ENCODE measurements at regions of chr22 and their contacts with region 1.

Region 1: GRCh38 chr22:29154364-29155048 is 51.2 kb upstream of the EMID1 start:
- DNase-seq: peak; percentile 75
- ATAC-seq: peak; percentile 95
- H3K4me3 Mint-ChIP-seq: no peak overlapping the region
- H3K27ac Mint-ChIP-seq: no peak overlapping the region
- H3K4me1 Mint-ChIP-seq: peaks cover 5% of the 10 kb centered on the region
- H3K27me3 Mint-ChIP-seq: peaks cover 25% of the 10 kb centered on the region
- CTCF ChIP-seq: peak; percentile 94

Region 2: GRCh38 chr22:28841111-28841510 is 313.4 kb before region 1 on chr22:
- CTCF ChIA-PET with region 1: no interaction called
- POLR2A ChIA-PET with region 1: no interaction called
- intact Hi-C with region 1: no loop called
- DNase-seq: no peak
- ATAC-seq: no peak
- H3K4me3 Mint-ChIP-seq: no peak overlapping the region
- H3K27ac Mint-ChIP-seq: no peak overlapping the region
- H3K4me1 Mint-ChIP-seq: no peaks in the 10 kb centered on the region
- H3K27me3 Mint-ChIP-seq: no peaks in the 10 kb centered on the region
- CTCF ChIP-seq: no peak

Region 3: GRCh38 chr22:29112102-29112501 is 42.4 kb before region 1 on chr22:
- CTCF ChIA-PET with region 1: interaction called, 14 read pairs
- POLR2A ChIA-PET with region 1: no interaction called
- intact Hi-C with region 1: no loop called
- DNase-seq: no peak
- ATAC-seq: no peak
- H3K4me3 Mint-ChIP-seq: no peak overlapping the region
- H3K27ac Mint-ChIP-seq: no peak overlapping the region
- H3K4me1 Mint-ChIP-seq: no peaks in the 10 kb centered on the region
- H3K27me3 Mint-ChIP-seq: peaks cover 22% of the 10 kb centered on the region
- CTCF ChIP-seq: no peak

Region 4: DNA sequence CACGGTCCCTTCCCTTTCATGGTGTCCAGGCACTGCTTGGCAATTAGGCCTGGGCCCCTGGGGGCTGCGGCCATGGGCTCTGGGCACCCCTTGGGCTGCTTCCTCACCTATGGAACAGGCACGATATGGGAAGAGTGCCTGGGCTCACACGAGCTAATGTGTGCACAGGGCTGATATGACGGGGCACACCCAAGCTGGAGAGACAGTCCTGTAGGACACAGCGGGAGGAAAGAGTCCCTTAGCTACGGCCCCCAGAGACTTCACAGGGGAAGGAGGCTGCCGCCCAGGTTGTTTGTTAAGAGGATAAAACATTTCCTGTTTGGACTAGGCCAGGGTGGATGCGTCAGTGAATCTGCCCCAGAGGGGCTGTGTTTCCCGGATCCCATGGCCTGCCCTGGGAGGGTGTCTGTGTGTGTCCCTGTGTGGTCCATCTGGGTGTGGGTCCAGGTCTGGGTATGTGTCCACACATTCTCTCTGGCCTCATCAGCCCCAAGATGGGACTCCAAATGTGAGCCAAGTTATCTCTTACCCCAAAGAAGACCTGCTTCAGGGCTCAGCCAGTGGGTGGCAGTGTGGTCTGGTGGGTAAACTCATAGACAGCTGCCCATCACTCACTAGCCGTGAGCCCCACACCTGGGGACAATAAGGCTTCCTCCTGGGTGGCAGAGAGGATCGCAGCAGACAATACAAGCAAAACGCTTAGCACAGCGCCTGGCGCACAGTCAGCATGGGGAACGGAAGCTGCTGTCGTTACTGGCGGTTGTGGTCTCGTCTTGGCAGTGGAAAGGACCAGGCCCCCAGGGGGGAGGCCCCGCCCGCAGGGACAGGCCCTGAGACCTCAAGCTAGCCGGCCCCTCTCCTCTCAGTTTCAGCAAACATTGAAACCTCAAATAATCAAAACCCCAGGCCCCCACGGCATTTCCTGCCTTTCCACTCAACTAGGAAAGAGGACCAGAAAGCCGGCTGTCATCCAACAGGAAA is 48.0 kb after region 1 on chr22:
- CTCF ChIA-PET with region 1: interaction called, 12 read pairs
- POLR2A ChIA-PET with region 1: no interaction called
- intact Hi-C with region 1: no loop called
- DNase-seq: peak; percentile 91
- ATAC-seq: peak; percentile 89
- H3K4me3 Mint-ChIP-seq: no peak overlapping the region
- H3K27ac Mint-ChIP-seq: peak overlapping the region; percentile 80
- H3K4me1 Mint-ChIP-seq: peaks cover 25% of the 10 kb centered on the region
- H3K27me3 Mint-ChIP-seq: peaks cover 48% of the 10 kb centered on the region
- CTCF ChIP-seq: no peak

Region 5: DNA sequence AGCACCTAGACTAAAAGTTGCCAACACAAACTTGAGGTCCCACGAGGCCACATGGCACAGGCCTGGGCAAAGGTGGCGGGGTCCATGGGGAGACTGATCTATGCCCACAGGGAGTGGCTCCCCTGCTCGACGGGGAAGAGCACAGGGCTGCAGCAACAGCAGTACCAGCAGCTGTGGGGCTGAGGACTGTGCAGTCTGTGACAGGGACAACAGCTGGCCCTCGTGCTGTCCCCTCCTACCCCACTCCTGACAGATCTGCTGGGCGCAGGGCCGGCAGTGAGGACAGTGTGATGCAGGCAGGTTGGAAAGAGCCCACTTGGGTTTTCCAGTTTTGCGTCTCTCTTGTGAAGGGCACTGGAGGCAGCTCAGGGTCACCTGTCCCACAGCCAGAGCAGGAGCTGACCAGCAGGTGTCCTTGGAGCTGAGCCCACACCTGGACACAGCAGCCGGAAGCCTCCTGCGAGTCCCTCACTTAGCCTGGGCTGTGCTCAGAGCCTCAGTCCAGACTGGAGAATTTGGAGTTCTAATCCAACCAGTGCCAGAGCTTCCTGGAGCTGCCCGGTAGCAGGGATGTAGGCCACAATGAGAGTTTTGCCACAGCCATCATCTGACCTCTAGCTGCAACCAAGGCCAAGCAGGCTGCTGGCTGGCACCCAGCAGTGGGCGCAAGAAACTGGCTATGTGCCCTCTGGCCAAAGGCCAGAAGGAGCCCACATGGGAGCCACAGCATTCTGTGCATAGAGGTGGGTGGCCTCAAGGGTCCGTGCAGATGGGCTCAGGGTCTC is 148.4 kb after region 1 on chr22:
- CTCF ChIA-PET with region 1: no interaction called
- POLR2A ChIA-PET with region 1: no interaction called
- intact Hi-C with region 1: no loop called
- DNase-seq: no peak
- ATAC-seq: no peak
- H3K4me3 Mint-ChIP-seq: no peak overlapping the region
- H3K27ac Mint-ChIP-seq: no peak overlapping the region
- H3K4me1 Mint-ChIP-seq: peaks cover 15% of the 10 kb centered on the region
- H3K27me3 Mint-ChIP-seq: peaks cover 23% of the 10 kb centered on the region
- CTCF ChIP-seq: no peak